ENCODE measurements at regions of chr19 and their contacts with region 1.

Region 1: DNA sequence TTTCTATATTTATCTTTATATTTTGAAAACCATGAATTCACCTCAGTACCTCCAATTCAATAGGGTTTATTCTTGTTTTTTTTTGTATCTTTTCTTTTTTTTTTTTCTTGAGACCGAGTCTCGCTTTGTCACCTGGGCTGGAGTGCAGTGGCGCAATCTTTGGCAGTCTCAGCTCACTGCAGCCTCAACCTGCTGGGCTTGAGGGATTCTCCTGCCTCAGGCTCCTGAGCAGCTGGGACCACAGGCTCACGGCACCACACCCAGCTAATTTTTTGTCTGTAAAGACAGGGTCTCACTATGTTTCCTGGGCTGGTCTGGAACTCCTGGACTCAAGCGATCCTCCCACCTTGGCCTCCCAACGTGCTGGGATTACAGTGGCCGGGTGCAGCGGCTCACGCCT is 23.1 kb upstream of the EVI5L start:
- DNase-seq: no peak
- H3K4me3 Mint-ChIP-seq: no peak overlapping the region
- H3K27ac Mint-ChIP-seq: no peak overlapping the region
- H3K4me1 Mint-ChIP-seq: peaks cover 9% of the 10 kb centered on the region
- H3K27me3 Mint-ChIP-seq: peaks cover 29% of the 10 kb centered on the region

Region 2: DNA sequence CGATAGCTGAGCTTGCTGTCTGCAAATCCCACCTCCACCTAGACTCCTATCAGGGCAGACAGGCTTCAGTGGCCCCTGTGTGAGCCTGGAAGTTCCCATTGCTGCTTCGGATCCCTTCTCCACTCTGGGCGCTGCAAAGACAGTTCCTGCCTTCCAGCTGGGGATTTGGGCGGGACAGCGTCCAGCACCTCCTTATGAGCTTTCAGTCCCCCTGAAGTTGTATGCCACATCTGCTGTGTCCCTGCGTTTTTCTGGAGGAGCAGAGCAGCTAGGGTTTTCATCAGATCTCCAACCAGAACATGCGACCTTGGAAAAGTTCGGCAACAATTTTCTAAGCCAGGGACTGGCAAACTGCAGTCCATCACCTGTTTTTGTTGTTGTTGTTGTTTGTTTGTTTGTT is 420.1 kb before region 1 on chr19:
- intact Hi-C with region 1: loop called (anchors 1 kb)
- DNase-seq: no peak
- H3K4me3 Mint-ChIP-seq: no peak overlapping the region
- H3K27ac Mint-ChIP-seq: no peak overlapping the region
- H3K4me1 Mint-ChIP-seq: peaks cover 4% of the 10 kb centered on the region
- H3K27me3 Mint-ChIP-seq: no peaks in the 10 kb centered on the region